Activated B cell treated with CpG ODN at 0.5 μM for 24 hours (primary cell): ENCODE measurements at regions of chr20 and their contacts with region 1.

Region 1: GRCh38 chr20:3767427-3768341 is at the start of gene ADISSP:
- DNase-seq: peak; percentile 95
- ATAC-seq: peak; percentile 86
- H3K4me3 Mint-ChIP-seq: peak within 1 kb of the TSS; percentile 90
- H3K27ac Mint-ChIP-seq: peak within 1 kb of the TSS; percentile 94
- H3K4me1 Mint-ChIP-seq: peaks cover 26% of the 10 kb centered on the region
- H3K27me3 Mint-ChIP-seq: peaks cover 3% of the 10 kb centered on the region
- CTCF ChIP-seq: no peak
- total RNA-seq, gene ADISSP: 29.9 and 31.1 TPM in 2 replicates

Region 2: DNA sequence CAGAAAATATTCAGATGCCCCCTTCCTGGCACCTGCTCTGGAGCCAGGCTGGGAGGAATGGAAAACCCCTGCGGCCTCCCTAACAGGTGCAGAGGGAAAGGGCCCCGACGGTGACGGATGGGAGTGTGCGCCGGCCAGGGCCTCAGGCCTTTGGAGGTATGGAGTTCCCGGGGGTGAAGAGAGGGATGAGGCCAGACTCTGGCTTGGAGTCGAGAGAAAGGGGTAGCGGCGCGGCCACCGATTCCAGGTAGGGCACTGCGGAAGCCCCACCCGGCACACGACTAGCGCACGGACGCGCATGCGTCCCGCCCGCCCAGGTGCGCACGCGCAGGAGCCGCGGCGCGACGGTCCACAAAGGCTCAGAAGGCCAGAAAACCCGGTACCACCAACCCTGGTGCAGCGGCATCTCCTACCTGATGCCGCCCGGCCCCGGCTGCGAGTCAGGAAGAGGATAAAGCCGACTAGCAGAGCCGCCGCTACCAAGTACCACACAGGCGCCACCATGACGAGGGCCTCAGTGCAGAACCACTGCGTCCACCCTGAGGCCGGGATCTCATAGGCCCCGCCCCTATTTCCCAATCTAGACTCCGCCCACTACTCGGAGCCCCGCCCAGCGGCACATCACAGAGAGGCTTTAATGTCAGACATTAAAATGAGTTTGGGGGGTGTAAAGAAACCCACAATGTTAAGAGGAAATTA is 563.4 kb before region 1 on chr20 and contains the start of gene DDRGK1:
- CTCF ChIA-PET with region 1: no interaction called
- POLR2A ChIA-PET with region 1: no interaction called
- intact Hi-C with region 1: loop called (anchors 10 kb)
- DNase-seq: peak; percentile 93
- ATAC-seq: peak; percentile 93
- H3K4me3 Mint-ChIP-seq: peak within 1 kb of the TSS; percentile 97
- H3K27ac Mint-ChIP-seq: peak within 1 kb of the TSS; percentile 94
- H3K4me1 Mint-ChIP-seq: peaks cover 22% of the 10 kb centered on the region
- H3K27me3 Mint-ChIP-seq: no peaks in the 10 kb centered on the region
- CTCF ChIP-seq: no peak
- total RNA-seq, gene DDRGK1: 37.1 and 46.1 TPM in 2 replicates

Region 3: GRCh38 chr20:3679749-3680700 is 87.7 kb before region 1 on chr20:
- CTCF ChIA-PET with region 1: interaction called, 8 read pairs
- POLR2A ChIA-PET with region 1: no interaction called
- intact Hi-C with region 1: loop called (anchors 1 kb)
- DNase-seq: no peak
- ATAC-seq: no peak
- H3K4me3 Mint-ChIP-seq: no peak overlapping the region
- H3K27ac Mint-ChIP-seq: no peak overlapping the region
- H3K4me1 Mint-ChIP-seq: peaks cover 7% of the 10 kb centered on the region
- H3K27me3 Mint-ChIP-seq: peaks cover 40% of the 10 kb centered on the region
- CTCF ChIP-seq: no peak

Region 4: DNA sequence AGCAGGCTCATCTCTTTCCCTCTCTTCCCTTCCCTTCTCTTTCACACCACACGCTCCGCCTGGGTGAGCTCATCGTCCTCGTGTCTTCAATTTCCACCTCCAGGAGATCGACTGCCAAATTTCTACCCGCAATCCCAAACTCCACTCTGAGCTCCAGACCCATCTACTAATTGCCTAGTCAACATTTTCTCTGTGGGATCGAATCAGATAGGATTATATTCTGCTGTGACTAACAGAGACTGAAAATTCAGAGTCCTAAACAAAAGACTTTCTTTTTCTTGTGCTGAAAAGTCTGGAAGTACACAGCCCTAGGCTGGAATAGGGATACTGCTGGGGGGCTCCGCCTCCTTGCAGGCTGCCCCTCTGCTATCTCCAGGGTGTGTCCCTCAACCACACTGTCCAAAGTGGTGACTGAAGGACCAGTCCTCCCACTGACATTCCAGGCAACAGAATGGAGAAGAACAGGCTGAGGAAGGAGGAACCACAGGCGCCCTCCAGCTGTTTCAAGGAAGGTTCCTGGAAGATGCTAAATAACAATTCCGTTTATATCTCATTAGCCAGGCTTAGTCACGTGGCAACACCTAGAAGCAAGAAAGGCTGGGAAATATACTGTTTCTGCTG is 40.2 kb before region 1 on chr20:
- CTCF ChIA-PET with region 1: no interaction called
- POLR2A ChIA-PET with region 1: no interaction called
- intact Hi-C with region 1: no loop called
- DNase-seq: no peak
- ATAC-seq: no peak
- H3K4me3 Mint-ChIP-seq: no peak overlapping the region
- H3K27ac Mint-ChIP-seq: no peak overlapping the region
- H3K4me1 Mint-ChIP-seq: no peaks in the 10 kb centered on the region
- H3K27me3 Mint-ChIP-seq: peaks cover 46% of the 10 kb centered on the region
- CTCF ChIP-seq: no peak

Region 5: DNA sequence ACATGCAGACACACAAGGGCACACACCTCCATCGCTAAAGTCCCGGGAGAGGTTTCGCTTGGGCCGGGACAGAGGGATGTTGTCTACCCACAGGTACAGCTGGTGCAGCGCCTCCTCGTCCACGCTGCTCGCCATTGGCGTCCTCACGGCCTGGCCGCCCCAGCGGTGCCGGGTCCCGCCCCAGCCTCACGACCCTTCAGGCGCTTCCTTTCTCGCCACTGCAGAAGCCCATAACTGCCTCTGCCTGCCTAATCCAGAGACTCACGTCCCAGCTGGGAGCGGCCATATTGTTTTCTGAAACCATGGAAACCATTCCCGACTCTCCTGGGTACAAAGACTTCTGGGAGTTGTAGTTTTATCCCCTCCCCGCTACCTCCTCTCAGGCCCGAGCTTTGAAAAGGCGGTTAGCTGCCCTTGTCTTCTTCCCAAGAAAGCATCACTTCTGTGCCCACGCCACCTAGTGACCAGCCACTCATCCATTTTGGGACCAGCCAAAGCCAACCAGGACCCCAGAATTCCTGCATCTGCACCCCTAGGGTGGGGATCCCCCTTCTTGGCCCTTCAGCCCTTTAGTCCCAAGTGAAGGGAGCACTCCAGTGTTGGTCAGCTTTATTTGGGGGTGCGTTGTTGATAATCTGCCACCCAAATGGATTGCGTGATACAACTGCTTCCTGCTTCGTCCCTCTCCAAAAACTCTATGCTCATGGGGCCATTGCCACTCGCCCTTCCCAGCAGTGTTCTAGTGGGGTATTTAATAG is 13.6 kb after region 1 on chr20 and contains the start of gene SPEF1:
- CTCF ChIA-PET with region 1: interaction called, 18 read pairs
- POLR2A ChIA-PET with region 1: interaction called, 33 read pairs
- intact Hi-C with region 1: loop called (anchors 1 kb)
- DNase-seq: no peak
- ATAC-seq: peak; percentile 67
- H3K4me3 Mint-ChIP-seq: peak within 1 kb of the TSS; percentile 79
- H3K27ac Mint-ChIP-seq: peak within 1 kb of the TSS; percentile 74
- H3K4me1 Mint-ChIP-seq: peaks cover 49% of the 10 kb centered on the region
- H3K27me3 Mint-ChIP-seq: peaks cover 2% of the 10 kb centered on the region
- CTCF ChIP-seq: no peak
- total RNA-seq, gene SPEF1: not detected in 2 replicates

Region 6: GRCh38 chr20:3820048-3820900 is 52.6 kb after region 1 on chr20 and contains the start of gene AP5S1:
- CTCF ChIA-PET with region 1: interaction called, 14 read pairs
- POLR2A ChIA-PET with region 1: interaction called, 45 read pairs
- intact Hi-C with region 1: loop called (anchors 1 kb)
- DNase-seq: peak; percentile 95
- ATAC-seq: peak; percentile 88
- H3K4me3 Mint-ChIP-seq: peak within 1 kb of the TSS; percentile 92
- H3K27ac Mint-ChIP-seq: peak within 1 kb of the TSS; percentile 97
- H3K4me1 Mint-ChIP-seq: peaks cover 20% of the 10 kb centered on the region
- H3K27me3 Mint-ChIP-seq: no peaks in the 10 kb centered on the region
- CTCF ChIP-seq: peak; percentile 96
- total RNA-seq, gene AP5S1: 13.4 and 13.5 TPM in 2 replicates